Sciatic nerve (tissue), 2 donors: ENCODE measurements at regions of chr15 and their contacts with region 1.

Region 1: DNA sequence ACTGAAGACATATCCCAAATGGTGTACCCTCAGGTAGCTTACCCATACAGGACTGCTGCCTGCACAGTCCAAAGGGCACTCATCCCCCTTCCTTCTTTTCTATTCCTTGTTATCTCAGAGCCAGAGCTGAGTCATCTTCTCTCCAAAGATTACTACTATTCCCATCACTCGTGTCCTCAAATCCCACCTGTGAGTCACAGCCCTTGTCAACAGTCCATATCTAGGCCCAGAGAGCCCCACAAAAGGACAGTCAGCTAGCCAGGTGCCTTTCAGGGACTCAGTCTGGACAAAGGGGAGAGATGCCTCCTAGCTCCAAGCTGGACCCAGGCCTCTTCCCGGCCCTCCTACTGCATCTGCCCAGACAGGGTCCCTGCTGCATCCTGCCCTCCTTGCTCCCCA is 11.0 kb downstream of the PARP16 start:
- DNase-seq: no peak
- ATAC-seq: no peak

Region 2: GRCh38 chr15:65184868-65185738 is 90.6 kb before region 1 on chr15 and contains the start of gene CLPX:
- intact Hi-C with region 1: loop called (anchors 10 kb)
- DNase-seq: peak; percentile 94
- ATAC-seq: peak; percentile 97
- total RNA-seq, gene CLPX: 49.8 TPM